Pancreas (tissue), 10 donors: ENCODE measurements at regions of chr1 and their contacts with region 1.

Region 1: GRCh38 chr1:87953732-87954344 is 625.2 kb downstream of the LMO4 start:
- DNase-seq: peak in 4 of 6 donors; percentile 36 to 72 (median 47)
- ATAC-seq: peak; percentile 81 to 97 (median 94)
- H3K4me3 ChIP-seq: no peak overlapping the region
- H3K27ac ChIP-seq: no peak overlapping the region
- H3K4me1 ChIP-seq: no peaks in the 10 kb centered on the region
- H3K27me3 ChIP-seq: no peaks in the 10 kb centered on the region
- CTCF ChIP-seq: peak; percentile 53 to 74 (median 68)

Region 2: GRCh38 chr1:87149666-87150065 is 804.2 kb before region 1 on chr1:
- intact Hi-C with region 1: loop called in 1 of 3 experiments (anchors 10 kb)
- DNase-seq: no peak
- ATAC-seq: peak in 2 of 4 donors; percentile 20 to 29
- H3K4me3 ChIP-seq: no peak overlapping the region
- H3K27ac ChIP-seq: no peak overlapping the region
- H3K4me1 ChIP-seq: no peaks in the 10 kb centered on the region
- H3K27me3 ChIP-seq: no peaks in the 10 kb centered on the region
- CTCF ChIP-seq: no peak

Region 3: DNA sequence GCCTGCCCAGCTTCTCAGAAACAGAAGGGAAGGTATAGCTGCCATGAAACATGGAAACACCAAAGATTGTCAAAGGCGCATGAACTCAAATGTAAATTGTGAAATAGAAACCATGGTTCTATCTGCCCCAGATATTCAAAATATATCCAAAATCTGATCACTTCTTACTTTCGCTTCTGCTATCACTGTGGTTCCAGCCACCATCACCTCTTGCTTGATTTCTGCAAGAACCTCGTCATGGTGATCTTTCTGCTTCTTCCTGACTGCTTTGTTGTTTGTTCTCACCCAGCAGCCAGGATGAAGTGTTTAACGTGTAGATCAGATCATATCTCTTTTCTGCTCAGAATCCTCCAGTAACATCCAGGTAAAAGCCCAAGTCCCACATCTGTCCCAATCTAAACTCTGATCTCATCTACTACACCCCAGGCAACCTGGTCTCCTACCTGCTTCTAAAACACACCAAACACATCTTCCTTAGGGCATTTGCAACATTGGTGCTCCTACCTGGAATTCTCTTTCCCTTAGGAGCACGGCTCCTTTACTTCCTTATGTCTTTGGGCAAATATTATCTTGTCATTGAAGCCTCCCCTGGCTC is 635.7 kb before region 1 on chr1:
- intact Hi-C with region 1: loop called in 1 of 3 experiments (anchors 5 kb)
- DNase-seq: no peak
- ATAC-seq: no peak
- H3K4me3 ChIP-seq: no peak overlapping the region
- H3K27ac ChIP-seq: no peak overlapping the region
- H3K4me1 ChIP-seq: no peaks in the 10 kb centered on the region
- H3K27me3 ChIP-seq: no peaks in the 10 kb centered on the region
- CTCF ChIP-seq: no peak

Region 4: DNA sequence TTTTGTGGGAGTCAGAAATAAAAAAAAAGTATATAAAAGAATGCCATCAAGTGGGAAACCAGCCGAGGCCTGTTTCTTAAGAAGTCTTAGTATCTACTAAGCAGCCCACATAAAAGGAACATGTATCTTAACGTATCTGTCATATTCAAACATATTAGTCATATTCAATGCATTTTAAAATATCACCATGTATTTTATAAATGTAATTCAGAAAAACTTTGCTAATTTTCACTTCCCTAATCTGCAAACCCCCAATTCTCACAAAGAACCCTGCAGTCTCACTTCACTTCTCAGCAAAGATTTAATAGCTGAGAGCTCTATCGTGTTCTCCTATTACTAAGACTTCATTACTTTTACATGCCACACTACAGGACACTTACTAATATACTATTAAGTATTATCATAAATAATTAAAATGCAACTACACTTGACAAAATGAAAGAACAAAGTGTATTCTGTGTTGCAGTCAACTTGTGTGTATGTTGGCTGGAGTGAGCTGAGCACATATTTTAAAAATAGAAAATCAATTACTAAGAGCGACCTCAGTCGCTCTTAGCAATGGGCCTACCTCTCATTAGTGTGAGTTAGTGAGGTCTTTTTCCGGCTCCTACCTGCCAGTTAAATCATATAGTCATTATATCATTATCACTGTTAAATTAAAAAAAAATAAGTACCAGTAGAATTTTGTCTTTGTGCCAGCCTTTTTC is 140.8 kb before region 1 on chr1:
- intact Hi-C with region 1: no loop called
- DNase-seq: no peak
- ATAC-seq: peak in 2 of 4 donors; percentile 30 to 66
- H3K4me3 ChIP-seq: no peak overlapping the region
- H3K27ac ChIP-seq: no peak overlapping the region
- H3K4me1 ChIP-seq: peaks cover 0 to 6% (median 5%) of the 10 kb centered on the region in 3 donors
- H3K27me3 ChIP-seq: no peaks in the 10 kb centered on the region
- CTCF ChIP-seq: no peak